ENCODE measurements at regions of chr2 and their contacts with region 1.

Region 1: GRCh38 chr2:68282811-68283418 is 30.6 kb upstream of the PPP3R1 start:
- DNase-seq: no peak
- ATAC-seq: no peak
- H3K4me3 ChIP-seq: no peak overlapping the region
- H3K27ac ChIP-seq: no peak overlapping the region
- H3K4me1 ChIP-seq: peaks cover 4% of the 10 kb centered on the region
- H3K27me3 ChIP-seq: no peaks in the 10 kb centered on the region

Region 2: GRCh38 chr2:68196120-68196716 is 86.7 kb before region 1 on chr2:
- intact Hi-C with region 1: loop called in 1 of 4 experiments (anchors 10 kb)
- DNase-seq: peak in 2 of 3 donors; percentile 32 to 55
- ATAC-seq: no peak
- H3K4me3 ChIP-seq: no peak overlapping the region
- H3K27ac ChIP-seq: no peak overlapping the region
- H3K4me1 ChIP-seq: no peaks in the 10 kb centered on the region
- H3K27me3 ChIP-seq: no peaks in the 10 kb centered on the region

Region 3: GRCh38 chr2:68244456-68244855 is 38.5 kb before region 1 on chr2:
- intact Hi-C with region 1: no loop called
- DNase-seq: no peak
- ATAC-seq: no peak
- H3K4me3 ChIP-seq: no peak overlapping the region
- H3K27ac ChIP-seq: no peak overlapping the region
- H3K4me1 ChIP-seq: peaks cover 8% of the 10 kb centered on the region
- H3K27me3 ChIP-seq: no peaks in the 10 kb centered on the region

Measured in right cardiac atrium (tissue), 5 donors.